H1 (cell line): ENCODE measurements at regions of chr17 and their contacts with region 1.

Region 1: GRCh38 chr17:13008461-13008860 is 9.4 kb downstream of the ELAC2 start:
- DNase-seq: no peak
- H3K4me3 ChIP-seq: no peak overlapping the region
- H3K27ac ChIP-seq: no peak overlapping the region
- H3K4me1 ChIP-seq: no peaks in the 10 kb centered on the region
- H3K27me3 ChIP-seq: no peaks in the 10 kb centered on the region
- CTCF ChIP-seq: no peak
- EP300 ChIP-seq: no peak
- POLR2A ChIP-seq: no peak
- RAD21 ChIP-seq: no peak

Region 2: DNA sequence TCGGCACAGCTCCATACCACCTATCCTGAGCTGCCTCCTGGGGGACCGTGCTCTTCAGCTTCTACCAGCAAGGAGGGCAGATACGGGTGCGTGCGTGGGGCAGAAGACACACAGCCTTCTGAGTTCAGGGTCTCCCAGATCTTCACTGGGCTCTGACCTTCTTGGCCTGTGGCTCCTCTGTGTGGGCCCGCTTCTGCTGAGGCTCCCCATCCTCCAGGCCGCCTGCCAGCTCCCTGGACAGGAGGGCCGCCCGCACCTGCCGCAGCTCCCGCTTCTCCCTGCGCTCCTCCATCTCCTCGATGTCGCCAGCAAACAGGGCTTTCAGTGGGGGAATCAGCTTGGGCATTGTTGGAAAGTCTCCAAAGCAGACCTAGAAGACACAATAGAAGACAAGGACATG is 15.8 kb before region 1 on chr17:
- CTCF ChIA-PET with region 1: interaction called, 18 read pairs
- POLR2A ChIA-PET with region 1: interaction called, 13 read pairs
- DNase-seq: no peak
- H3K4me3 ChIP-seq: no peak overlapping the region
- H3K27ac ChIP-seq: no peak overlapping the region
- H3K4me1 ChIP-seq: peaks cover 0 to 6% (median 0%) of the 10 kb centered on the region in 4 experiments; a peak in 2 of 7 replicates
- H3K27me3 ChIP-seq: no peaks in the 10 kb centered on the region
- CTCF ChIP-seq: no peak
- EP300 ChIP-seq: no peak
- POLR2A ChIP-seq: no peak
- RAD21 ChIP-seq: no peak

Region 3: GRCh38 chr17:13051915-13052314 is 43.5 kb after region 1 on chr17:
- CTCF ChIA-PET with region 1: no interaction called
- POLR2A ChIA-PET with region 1: no interaction called
- DNase-seq: no peak
- H3K4me3 ChIP-seq: no peak overlapping the region
- H3K27ac ChIP-seq: no peak overlapping the region
- H3K4me1 ChIP-seq: no peaks in the 10 kb centered on the region
- H3K27me3 ChIP-seq: no peaks in the 10 kb centered on the region
- CTCF ChIP-seq: no peak
- EP300 ChIP-seq: no peak
- POLR2A ChIP-seq: no peak
- RAD21 ChIP-seq: no peak

Region 4: DNA sequence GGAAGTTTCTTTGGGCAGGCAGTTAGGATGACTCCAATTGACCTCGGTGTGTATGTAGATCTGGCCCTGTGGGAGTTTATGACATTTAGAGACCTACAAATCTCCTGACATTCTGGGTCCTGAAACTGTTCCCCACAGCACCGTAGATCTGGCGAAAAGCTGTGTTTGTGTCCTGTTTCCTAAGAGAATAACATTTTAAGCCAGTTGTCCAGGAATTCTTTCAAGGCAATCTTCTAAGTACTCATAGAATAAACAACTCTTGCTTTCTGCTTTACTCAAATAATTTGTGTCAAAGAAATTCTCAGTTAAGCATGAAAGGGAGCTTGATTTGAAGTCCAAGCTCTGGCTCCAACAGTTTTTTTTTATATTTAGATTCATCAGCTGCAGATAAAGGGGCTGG is 87.8 kb after region 1 on chr17:
- CTCF ChIA-PET with region 1: no interaction called
- POLR2A ChIA-PET with region 1: no interaction called
- DNase-seq: no peak
- H3K4me3 ChIP-seq: no peak overlapping the region
- H3K27ac ChIP-seq: no peak overlapping the region
- H3K4me1 ChIP-seq: 0 out of 7 replicates have a peak, but pooled peaks cover 0 to 3% (median 0%) of the 10 kb centered on the region in 4 experiments
- H3K27me3 ChIP-seq: no peaks in the 10 kb centered on the region
- CTCF ChIP-seq: no peak
- EP300 ChIP-seq: no peak
- POLR2A ChIP-seq: no peak
- RAD21 ChIP-seq: no peak